ENCODE measurements at regions of chr12 and their contacts with region 1.

Region 1: DNA sequence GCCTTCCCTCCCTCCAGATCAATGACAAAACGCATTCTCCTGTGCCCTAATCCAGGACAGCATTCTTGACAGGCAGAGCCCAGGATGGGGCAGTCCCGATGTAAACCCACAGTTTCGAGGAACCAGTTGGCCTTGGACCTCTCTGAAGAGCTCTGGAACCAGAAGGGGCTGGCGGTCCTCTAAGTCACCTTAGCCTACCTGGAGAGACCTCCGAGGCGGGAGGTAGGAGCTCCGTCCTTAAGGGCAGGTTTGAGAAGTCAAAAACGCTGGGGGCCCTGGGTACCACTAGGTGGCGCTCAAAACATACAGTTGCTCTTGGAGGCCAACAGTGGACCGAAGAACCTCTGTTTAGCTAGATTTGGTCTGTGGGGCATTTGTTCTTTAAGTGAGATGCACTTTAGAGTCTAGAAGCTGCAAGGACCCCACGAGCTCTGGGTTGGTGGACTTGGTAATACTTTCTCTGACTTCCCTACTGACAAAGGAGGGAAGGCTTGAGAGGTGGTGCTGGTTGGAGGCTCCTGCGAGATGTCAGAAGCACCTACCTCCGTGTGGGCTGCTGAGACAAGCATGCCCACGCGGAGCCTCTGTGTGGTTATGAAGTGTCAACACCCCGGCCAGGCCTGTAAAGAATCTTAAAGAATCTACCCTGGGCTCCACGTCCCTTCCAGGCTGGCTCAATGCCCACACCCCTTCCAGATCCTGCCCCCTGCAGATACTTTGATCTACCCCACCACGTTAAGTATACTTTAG is 74.8 kb upstream of the CHST11 start:
- DNase-seq: peak; percentile 63 to 84
- ATAC-seq: peak; percentile 77

Region 2: GRCh38 chr12:104877123-104877705 is 495.3 kb after region 1 on chr12:
- intact Hi-C with region 1: loop called in 1 of 2 experiments (anchors 5 kb)
- DNase-seq: peak in 1 of 2 donors; percentile 10
- ATAC-seq: no peak

Region 3: GRCh38 chr12:105053116-105053572 is 671.2 kb after region 1 on chr12:
- intact Hi-C with region 1: loop called in 1 of 2 experiments (anchors 2 kb)
- DNase-seq: peak; percentile 54 to 81
- ATAC-seq: peak; percentile 84